A673 (cell line): ENCODE measurements at regions of chr10 and their contacts with region 1.

Region 1: GRCh38 chr10:122879339-122880273 is at the start of gene FAM24B:
- DNase-seq: peak; percentile 98
- H3K4me3 ChIP-seq: peak within 1 kb of the TSS; percentile 69
- H3K27ac ChIP-seq: peak within 1 kb of the TSS; percentile 77
- H3K4me1 ChIP-seq: peaks cover 12% of the 10 kb centered on the region
- H3K27me3 ChIP-seq: no peaks in the 10 kb centered on the region
- CTCF ChIP-seq: no peak
- total RNA-seq, gene FAM24B: 7.0 and 8.0 TPM in 2 replicates

Region 2: DNA sequence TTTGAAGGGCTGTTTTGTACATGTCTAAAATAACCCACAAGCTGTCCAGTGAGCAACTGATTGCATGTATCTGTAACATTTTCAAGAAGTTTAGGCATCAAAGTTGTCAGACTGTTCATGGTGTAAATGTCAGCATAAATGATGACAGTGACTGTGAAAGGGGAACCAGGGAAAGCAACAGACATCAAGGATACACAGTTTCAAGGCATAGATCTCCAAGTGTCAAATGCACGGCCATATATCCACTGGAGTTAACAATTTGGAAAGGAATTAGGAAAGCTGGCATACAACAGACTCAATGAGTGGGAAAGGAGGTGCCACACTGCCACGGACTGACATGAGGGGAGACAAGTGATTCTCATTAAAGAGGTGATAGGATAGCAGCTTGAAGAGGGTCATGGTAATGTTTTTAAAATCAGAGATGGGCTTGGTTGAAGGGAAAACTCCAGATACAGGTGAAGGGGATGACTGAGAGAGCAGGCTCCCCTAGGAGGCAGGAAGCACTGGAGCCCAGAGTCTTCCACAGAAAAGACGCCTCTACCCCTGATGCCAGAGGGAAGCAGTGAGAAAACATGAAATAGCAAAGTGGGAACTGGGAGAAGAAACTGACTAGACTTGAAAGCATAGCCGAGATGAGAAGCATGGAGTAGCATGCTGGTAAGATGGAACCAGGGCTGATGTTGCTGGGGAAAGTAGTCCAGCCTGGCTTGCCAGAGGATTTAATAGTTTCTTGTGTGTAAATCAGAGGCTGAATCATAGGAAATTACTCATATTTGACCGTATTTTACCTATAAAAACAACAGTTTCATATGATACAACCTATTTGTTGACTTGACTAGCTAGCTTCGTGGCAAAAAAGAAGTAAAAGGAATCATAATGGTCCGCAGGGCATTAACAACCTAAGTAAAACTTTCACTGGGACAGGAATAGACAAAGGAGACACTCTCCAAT is 923.2 kb before region 1 on chr10:
- CTCF ChIA-PET with region 1: no interaction called
- POLR2A ChIA-PET with region 1: interaction called, 12 read pairs
- intact Hi-C with region 1: no loop called
- DNase-seq: no peak
- H3K4me3 ChIP-seq: no peak overlapping the region
- H3K27ac ChIP-seq: no peak overlapping the region
- H3K4me1 ChIP-seq: no peaks in the 10 kb centered on the region
- H3K27me3 ChIP-seq: no peaks in the 10 kb centered on the region
- CTCF ChIP-seq: no peak

Region 3: GRCh38 chr10:122931088-122931958 is 51.7 kb after region 1 on chr10:
- CTCF ChIA-PET with region 1: no interaction called
- POLR2A ChIA-PET with region 1: no interaction called
- intact Hi-C with region 1: loop called (anchors 1 kb)
- DNase-seq: no peak
- H3K4me3 ChIP-seq: no peak overlapping the region
- H3K27ac ChIP-seq: no peak overlapping the region
- H3K4me1 ChIP-seq: no peaks in the 10 kb centered on the region
- H3K27me3 ChIP-seq: no peaks in the 10 kb centered on the region
- CTCF ChIP-seq: no peak

Region 4: DNA sequence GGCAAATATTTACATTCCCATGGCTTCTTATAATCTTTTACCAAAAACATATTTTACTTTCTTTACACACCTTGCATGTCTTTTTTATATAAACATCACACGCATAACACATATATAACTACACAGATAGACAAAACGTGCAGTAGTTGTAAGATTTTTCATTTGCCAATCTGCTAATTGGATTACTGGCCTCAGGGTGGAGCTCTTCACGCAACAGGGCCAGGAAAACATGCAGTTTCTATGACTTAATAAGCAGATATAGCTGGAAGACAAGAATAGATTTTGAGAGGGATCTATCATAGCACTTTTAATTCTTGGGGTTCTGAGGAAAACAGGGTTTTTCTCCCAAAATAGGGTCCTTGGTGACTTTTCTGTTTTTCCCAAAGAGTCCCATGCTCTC is 141.9 kb after region 1 on chr10:
- CTCF ChIA-PET with region 1: no interaction called
- POLR2A ChIA-PET with region 1: no interaction called
- intact Hi-C with region 1: no loop called
- DNase-seq: peak; percentile 55
- H3K4me3 ChIP-seq: no peak overlapping the region
- H3K27ac ChIP-seq: no peak overlapping the region
- H3K4me1 ChIP-seq: peaks cover 10% of the 10 kb centered on the region
- H3K27me3 ChIP-seq: no peaks in the 10 kb centered on the region
- CTCF ChIP-seq: peak; percentile 56